ENCODE measurements at regions of chr11 and their contacts with region 1.

Region 1: GRCh38 chr11:121508449-121508848 is 55.7 kb upstream of the SORL1-AS1 start:
- DNase-seq: no peak
- H3K4me3 ChIP-seq: no peak overlapping the region
- H3K27ac ChIP-seq: no peak overlapping the region
- H3K4me1 ChIP-seq: peaks cover 0 to 16% (median under 1%) of the 10 kb centered on the region in 4 experiments
- H3K27me3 ChIP-seq: no peaks in the 10 kb centered on the region

Region 2: GRCh38 chr11:121520243-121521144 is 12.0 kb after region 1 on chr11:
- CTCF ChIA-PET with region 1: interaction called, 11 read pairs
- POLR2A ChIA-PET with region 1: no interaction called
- DNase-seq: no peak
- H3K4me3 ChIP-seq: no peak overlapping the region
- H3K27ac ChIP-seq: no peak overlapping the region
- H3K4me1 ChIP-seq: peaks cover 4 to 47% (median 27%) of the 10 kb centered on the region in 4 experiments
- H3K27me3 ChIP-seq: no peaks in the 10 kb centered on the region